Activated T-helper 1 cell treated with anti-CD3 and anti-CD28 coated beads, Interleukin-12 subunit alpha, Interleukin-12 subunit beta, Interleukin-2, Interleukin-4 antibody, amounts not matched to agents 30 ng/mL and 10 ng/mL and 1 ng/mL, durations not matched to agents 14 hours and 24 hours and 36 hours (primary cell): ENCODE measurements at regions of chr19 and their contacts with region 1.

Region 1: DNA sequence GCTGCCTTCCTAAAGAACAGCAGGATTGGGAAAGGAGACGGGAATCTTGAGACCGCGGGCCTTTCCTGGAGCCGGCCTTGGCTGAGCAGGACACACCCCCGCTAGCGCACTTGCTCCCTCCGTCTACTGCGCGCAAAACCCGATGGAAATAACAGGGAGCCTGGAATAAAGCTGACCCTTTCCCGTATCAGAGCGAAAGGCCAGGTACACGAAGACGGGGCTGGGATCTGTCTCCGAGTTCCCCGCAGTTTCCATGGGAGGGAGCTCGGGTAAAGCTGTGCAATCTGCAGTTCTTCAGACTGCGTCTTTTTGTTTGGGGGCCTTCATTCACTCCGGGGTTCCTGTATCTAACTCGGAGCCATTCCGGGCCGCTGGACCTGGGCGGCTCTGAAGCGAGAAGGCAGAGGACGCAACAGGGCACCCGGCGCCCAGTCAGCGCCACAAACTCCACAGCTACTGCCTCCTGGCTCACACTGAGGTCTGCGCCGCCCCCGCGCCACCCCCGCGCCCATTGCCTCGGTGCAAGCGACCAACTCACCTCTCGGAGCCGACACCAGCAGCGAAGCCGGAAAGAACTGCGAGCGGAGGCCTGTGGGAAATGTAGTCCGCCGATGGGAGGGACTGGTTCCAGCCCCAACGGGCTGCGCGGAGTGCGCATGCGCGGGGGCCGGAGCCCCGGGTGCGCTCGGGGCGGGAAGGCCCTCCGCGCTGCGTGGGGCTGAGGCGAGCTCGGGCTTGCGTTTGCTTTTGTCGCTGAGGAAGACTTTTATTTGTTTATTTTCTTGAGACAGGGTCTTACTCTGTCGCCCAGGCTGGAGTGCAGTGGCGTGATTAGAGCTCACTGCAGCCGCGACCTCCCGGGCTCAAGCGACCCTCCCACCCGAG is at the start of gene ZFP14:
- DNase-seq: peak; percentile 91
- H3K4me3 Mint-ChIP-seq: peak within 1 kb of the TSS; percentile 86
- H3K27ac Mint-ChIP-seq: peak within 1 kb of the TSS; percentile 73
- H3K4me1 Mint-ChIP-seq: peaks cover 13% of the 10 kb centered on the region
- H3K27me3 Mint-ChIP-seq: no peaks in the 10 kb centered on the region
- total RNA-seq, gene ZFP14: 0.83 and 1.7 TPM in 2 replicates

Region 2: GRCh38 chr19:36132489-36132891 is 246.4 kb before region 1 on chr19:
- intact Hi-C with region 1: loop called (anchors 1 kb)
- DNase-seq: peak; percentile 17
- H3K4me3 Mint-ChIP-seq: peak overlapping the region; percentile 7
- H3K27ac Mint-ChIP-seq: peak overlapping the region; percentile 78
- H3K4me1 Mint-ChIP-seq: peaks cover 30% of the 10 kb centered on the region
- H3K27me3 Mint-ChIP-seq: peaks cover 1% of the 10 kb centered on the region

Region 3: GRCh38 chr19:36392916-36393673 is 14.2 kb after region 1 on chr19:
- intact Hi-C with region 1: no loop called
- DNase-seq: no peak
- H3K4me3 Mint-ChIP-seq: no peak overlapping the region
- H3K27ac Mint-ChIP-seq: no peak overlapping the region
- H3K4me1 Mint-ChIP-seq: no peaks in the 10 kb centered on the region
- H3K27me3 Mint-ChIP-seq: no peaks in the 10 kb centered on the region

Region 4: GRCh38 chr19:36418287-36419001 is 39.6 kb after region 1 on chr19 and contains the start of gene ZFP82:
- intact Hi-C with region 1: loop called (anchors 1 kb)
- DNase-seq: peak; percentile 73
- H3K4me3 Mint-ChIP-seq: peak within 1 kb of the TSS; percentile 93
- H3K27ac Mint-ChIP-seq: peak within 1 kb of the TSS; percentile 94
- H3K4me1 Mint-ChIP-seq: peaks cover 18% of the 10 kb centered on the region
- H3K27me3 Mint-ChIP-seq: peaks cover 5% of the 10 kb centered on the region
- total RNA-seq, gene ZFP82: 5.1 and 5.3 TPM in 2 replicates

Region 5: DNA sequence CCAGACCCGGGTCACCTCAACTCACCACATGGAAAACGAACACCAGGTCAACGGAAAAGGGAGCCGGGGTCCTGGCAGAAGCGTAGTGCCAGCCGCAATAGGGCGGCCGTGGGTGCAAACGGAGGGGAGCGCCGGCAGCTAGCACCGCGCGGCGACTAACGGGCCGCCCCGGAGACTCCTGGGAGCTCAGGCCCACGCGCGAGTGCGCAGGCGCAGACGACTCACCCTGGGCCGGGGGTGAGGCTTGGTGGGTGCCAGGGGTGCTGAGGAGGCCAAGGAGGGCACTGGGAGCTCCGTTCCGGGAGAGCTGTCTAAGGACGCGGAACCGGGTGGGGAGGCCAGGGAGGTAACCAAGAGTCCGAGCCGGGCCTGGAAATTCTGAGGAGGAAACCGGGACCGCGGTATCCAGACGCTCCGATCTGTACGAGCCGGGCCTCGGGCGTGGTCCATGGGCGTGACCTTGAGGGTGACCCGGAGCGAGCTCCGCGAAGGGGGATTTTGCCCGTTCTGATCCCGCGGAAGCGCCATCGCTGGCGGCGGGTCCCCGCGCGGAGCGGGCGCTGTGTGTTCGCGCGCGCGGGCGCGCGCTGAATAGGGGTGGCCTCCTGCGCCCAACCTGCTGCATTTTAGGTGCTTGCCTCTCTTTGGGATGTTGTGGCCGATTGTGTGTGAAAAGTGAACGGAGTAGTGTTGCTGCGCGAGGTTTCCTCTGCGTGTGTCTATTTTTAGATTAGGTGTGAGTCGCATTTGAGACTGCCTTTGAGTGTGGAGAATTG is 226.4 kb after region 1 on chr19 and contains the start of gene ZNF382:
- intact Hi-C with region 1: loop called (anchors 10 kb)
- DNase-seq: peak; percentile 85
- H3K4me3 Mint-ChIP-seq: peak within 1 kb of the TSS; percentile 90
- H3K27ac Mint-ChIP-seq: peak within 1 kb of the TSS; percentile 95
- H3K4me1 Mint-ChIP-seq: peaks cover 26% of the 10 kb centered on the region
- H3K27me3 Mint-ChIP-seq: no peaks in the 10 kb centered on the region
- total RNA-seq, gene ZNF382: 10.2 and 10.8 TPM in 2 replicates

Region 6: GRCh38 chr19:36837906-36838783 is 459.3 kb after region 1 on chr19 and contains the start of gene ZNF790:
- intact Hi-C with region 1: loop called (anchors 10 kb)
- DNase-seq: peak; percentile 81
- H3K4me3 Mint-ChIP-seq: no peak within 1 kb of the TSS
- H3K27ac Mint-ChIP-seq: no peak within 1 kb of the TSS
- H3K4me1 Mint-ChIP-seq: no peaks in the 10 kb centered on the region
- H3K27me3 Mint-ChIP-seq: no peaks in the 10 kb centered on the region
- total RNA-seq, gene ZNF790: 4.4 and 4.5 TPM in 2 replicates

Region 7: GRCh38 chr19:37370880-37371661 is 992.2 kb after region 1 on chr19 and contains the start of gene ZNF527:
- intact Hi-C with region 1: loop called (anchors 2 kb)
- DNase-seq: peak; percentile 96
- H3K4me3 Mint-ChIP-seq: peak within 1 kb of the TSS; percentile 99
- H3K27ac Mint-ChIP-seq: peak within 1 kb of the TSS; percentile 87
- H3K4me1 Mint-ChIP-seq: peaks cover 13% of the 10 kb centered on the region
- H3K27me3 Mint-ChIP-seq: no peaks in the 10 kb centered on the region
- total RNA-seq, gene ZNF527: 3.9 and 4.5 TPM in 2 replicates